Motor neuron (in vitro differentiated cells): ENCODE measurements at regions of chr14 and their contacts with region 1.

Region 1: GRCh38 chr14:34461334-34462131 is 507 bp downstream of the SPTSSA start:
- ATAC-seq: peak; percentile 15 to 47 (median 26)
- H3K4me3 ChIP-seq: peak overlapping the region; percentile 65 to 88 (median 75)
- H3K27ac ChIP-seq: peak overlapping the region; percentile 88 to 90
- H3K4me1 ChIP-seq: peaks cover 3 to 19% of the 10 kb centered on the region in 2 donors

Region 2: GRCh38 chr14:34331728-34332623 is 129.6 kb before region 1 on chr14:
- in situ Hi-C with region 1: loop called in 1 of 9 experiments (anchors 25 kb)
- ATAC-seq: peak; percentile 41 to 93 (median 90)
- H3K4me3 ChIP-seq: no peak overlapping the region
- H3K27ac ChIP-seq: peak overlapping the region in 1 of 2 donors; percentile 3
- H3K4me1 ChIP-seq: peaks cover 0 to 8% of the 10 kb centered on the region in 2 donors

Region 3: GRCh38 chr14:34409721-34410120 is 51.8 kb before region 1 on chr14:
- in situ Hi-C with region 1: no loop called
- ATAC-seq: no peak
- H3K4me3 ChIP-seq: no peak overlapping the region
- H3K27ac ChIP-seq: no peak overlapping the region
- H3K4me1 ChIP-seq: no peaks in the 10 kb centered on the region

Region 4: DNA sequence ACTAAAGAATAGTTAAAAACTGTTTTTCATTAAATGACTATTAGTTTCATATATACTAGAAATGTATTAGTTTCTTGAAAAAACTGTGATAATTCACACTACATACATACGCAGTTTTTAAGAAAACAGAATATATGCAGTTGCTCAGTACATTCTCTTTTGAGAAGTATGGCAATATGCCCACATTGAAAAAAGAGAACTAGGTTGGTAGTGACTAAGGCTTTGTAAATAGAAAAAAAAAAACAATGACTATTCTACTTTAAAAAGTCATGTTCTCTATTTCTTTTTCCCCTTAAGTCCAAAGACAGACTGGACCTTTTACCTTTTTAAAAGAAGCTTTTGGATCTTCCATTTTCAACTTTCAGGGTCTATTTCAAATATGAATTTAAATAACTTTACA is 143.5 kb after region 1 on chr14:
- in situ Hi-C with region 1: no loop called
- ATAC-seq: no peak
- H3K4me3 ChIP-seq: no peak overlapping the region
- H3K27ac ChIP-seq: no peak overlapping the region
- H3K4me1 ChIP-seq: no peaks in the 10 kb centered on the region